Cardiac septum (tissue), 1 donor: ENCODE measurements at regions of chr18 and their contacts with region 1.

Region 1: GRCh38 chr18:75209129-75209950 is at the start of gene PTGR3:
- DNase-seq: peak; percentile 89
- total RNA-seq, gene PTGR3: 33.7 TPM

Region 2: DNA sequence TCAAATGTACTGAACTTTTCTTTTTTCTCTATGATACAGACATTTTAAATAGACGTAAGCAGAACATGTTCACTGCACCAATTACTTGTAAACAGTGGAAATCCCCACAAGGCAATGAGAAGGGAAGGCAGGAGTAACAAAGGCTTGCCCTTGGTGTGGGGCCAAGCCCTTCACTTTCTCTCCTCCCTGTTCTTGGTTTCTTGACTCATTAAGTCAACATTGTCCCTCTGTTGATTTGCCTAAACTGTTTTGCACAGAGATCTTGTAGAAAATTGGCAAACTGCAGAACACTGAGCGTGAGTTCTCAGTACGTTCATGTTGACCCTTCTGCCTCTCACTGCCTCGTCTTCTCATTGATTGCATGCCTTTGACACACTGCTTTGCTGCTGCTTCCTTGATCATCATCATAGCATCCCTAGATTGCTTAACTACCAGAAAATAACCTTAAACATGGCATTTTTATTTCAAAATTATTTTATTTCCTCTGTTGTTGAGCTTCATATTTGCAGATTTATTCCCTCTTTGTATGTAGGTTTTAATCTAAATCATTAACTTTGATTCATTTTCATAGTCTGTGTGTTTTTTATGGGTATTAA is 258.1 kb before region 1 on chr18:
- intact Hi-C with region 1: no loop called
- DNase-seq: no peak

Region 3: DNA sequence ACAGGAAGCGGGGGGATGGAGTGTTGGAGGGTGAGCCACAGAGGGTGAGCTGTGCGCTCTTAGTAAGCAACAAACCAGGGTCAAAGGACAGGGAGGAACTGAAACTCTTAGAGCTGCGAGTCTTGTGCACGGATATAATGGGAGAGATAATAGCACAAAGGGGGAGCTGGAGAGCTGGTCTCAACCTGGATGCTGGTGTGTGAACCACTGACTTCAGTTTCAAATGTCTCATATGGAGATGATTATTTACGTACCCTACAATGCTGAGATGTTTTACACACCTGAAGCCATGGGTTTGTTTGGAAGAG is 36.3 kb before region 1 on chr18:
- intact Hi-C with region 1: loop called (anchors 5 kb)
- DNase-seq: no peak

Region 4: GRCh38 chr18:75226286-75226955 is 17.1 kb after region 1 on chr18:
- intact Hi-C with region 1: loop called (anchors 2 kb)
- DNase-seq: no peak

Region 5: DNA sequence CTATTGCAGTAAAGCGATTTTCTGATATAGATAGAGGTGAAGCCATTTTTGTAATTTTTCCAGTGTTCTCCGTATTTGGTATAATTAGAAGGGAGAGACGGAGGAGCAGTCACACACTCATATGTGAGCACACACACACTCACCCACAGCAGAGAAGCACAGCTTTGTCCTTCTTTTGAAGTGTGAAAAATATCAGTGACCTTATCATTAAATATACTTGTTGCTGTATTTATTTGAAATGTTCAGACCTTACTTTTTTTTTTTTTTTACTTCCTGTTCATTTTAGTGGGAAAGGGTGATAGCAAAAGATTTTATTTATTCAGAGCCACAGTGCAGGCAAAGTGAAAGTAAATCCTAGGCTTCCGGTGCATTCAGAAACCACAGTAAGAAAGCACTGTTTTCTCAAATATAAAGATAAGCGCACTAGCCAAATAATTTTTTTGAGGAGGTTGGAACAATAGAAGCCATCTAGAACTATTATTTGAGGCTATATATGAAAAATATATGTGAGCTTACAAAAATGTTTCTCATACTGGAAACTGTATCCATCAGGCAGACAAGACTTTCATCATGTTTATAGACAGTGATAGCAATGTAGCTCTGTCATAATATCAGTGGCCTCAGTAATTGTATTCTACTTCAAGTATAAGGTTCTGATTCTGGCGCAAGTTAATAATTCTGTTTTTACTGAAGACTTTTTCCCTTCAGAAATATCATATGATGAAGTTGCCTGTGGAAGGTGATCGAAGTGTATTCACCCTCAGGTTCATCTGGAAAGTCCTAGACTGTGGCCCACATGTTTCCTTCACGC is 38.5 kb after region 1 on chr18:
- intact Hi-C with region 1: loop called (anchors 2 kb)
- DNase-seq: no peak

Region 6: DNA sequence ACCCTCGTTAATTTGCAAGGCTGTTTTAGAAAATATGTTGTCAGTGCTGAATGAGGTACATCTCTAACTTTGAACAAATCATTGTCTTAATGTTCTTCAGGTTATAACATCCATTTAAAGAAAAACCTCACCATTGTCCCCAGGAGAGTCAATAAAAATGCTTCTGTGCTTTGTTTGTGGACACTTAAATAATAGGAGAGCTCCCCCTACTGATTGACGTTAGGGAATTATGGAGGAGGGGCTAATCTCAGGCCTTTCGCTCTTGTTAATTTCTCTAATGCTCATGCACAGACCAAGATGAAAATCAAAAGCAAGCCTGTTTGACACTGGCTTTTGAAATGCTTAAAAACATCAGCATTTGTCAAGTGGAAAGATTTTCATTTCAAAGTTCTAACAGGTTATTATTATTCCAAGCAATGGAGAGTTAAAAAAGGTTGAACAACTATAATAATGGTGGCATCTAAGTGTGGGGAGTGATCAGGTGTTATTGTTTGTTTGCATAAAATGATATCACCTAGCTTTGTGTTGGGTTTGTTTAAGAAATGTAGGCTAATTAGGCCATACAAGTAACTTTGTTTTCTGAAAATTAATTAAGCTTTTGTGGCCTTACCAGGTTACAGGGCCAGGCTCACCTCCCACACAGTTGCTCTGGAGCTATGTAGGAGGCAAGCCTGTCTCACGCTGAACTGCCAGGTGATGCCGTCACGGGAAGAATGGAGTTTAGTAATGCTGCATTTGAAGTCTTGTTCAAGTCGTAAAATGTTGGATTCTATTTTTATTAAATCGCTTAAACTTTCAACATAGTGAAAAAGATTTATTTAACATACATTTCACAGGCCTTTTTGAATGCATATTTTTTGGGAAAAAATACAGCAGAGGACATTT is 269.9 kb after region 1 on chr18:
- intact Hi-C with region 1: loop called (anchors 10 kb)
- DNase-seq: no peak

Region 7: GRCh38 chr18:76822510-76823160 is 1613.3 kb after region 1 on chr18 and contains the start of gene ZNF236:
- intact Hi-C with region 1: loop called (anchors 10 kb)
- DNase-seq: no peak
- total RNA-seq, gene ZNF236: 12.7 TPM